ENCODE measurements at regions of chr15 and their contacts with region 1.

Region 1: DNA sequence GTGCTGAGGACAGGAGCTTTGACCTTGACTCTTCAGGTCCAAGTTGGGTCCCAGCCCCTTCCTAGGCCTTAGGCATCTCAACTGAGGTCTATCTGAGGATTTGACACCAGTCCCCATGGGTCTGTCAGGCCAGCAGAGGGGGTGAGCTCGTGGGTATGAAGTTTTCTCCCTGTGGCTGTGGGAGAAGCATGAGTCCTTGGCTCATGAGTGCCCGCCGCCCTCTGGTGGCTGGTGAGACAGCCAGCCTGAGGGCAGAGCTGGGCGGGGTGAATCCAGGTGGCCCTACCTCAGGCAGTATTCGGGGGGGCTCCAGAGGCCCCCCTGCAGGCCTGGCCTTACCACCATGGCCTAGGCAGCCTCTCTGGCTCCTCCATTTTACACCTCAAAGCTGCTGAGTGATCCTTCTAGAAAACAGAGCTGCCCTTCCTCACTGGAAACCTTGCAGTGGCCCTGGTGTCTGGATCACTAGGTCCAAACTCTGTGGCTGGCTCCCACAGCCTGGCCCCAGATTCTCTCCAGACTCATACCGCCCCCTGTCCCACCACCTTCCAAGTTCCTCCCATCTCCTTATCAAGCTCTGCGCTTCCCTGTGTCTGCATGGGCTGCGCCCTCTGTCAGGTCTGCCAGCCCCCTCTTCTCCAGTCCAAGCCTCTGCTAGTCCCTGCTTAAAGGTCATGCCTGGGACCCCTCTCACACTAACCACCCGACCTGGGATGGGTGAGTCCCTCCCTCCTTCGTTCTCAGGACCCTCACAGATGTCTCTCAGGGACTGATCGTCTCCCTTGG is 16.1 kb downstream of the SH2D7 start:
- DNase-seq: peak; percentile 73
- H3K4me3 Mint-ChIP-seq: no peak overlapping the region
- H3K27ac Mint-ChIP-seq: no peak overlapping the region
- H3K4me1 Mint-ChIP-seq: peaks cover 50% of the 10 kb centered on the region
- H3K27me3 Mint-ChIP-seq: no peaks in the 10 kb centered on the region

Region 2: GRCh38 chr15:77959432-77959879 is 149.0 kb before region 1 on chr15:
- intact Hi-C with region 1: loop called (anchors 1 kb)
- DNase-seq: peak; percentile 67
- H3K4me3 Mint-ChIP-seq: no peak overlapping the region
- H3K27ac Mint-ChIP-seq: no peak overlapping the region
- H3K4me1 Mint-ChIP-seq: peaks cover 14% of the 10 kb centered on the region
- H3K27me3 Mint-ChIP-seq: peaks cover 35% of the 10 kb centered on the region

Region 3: DNA sequence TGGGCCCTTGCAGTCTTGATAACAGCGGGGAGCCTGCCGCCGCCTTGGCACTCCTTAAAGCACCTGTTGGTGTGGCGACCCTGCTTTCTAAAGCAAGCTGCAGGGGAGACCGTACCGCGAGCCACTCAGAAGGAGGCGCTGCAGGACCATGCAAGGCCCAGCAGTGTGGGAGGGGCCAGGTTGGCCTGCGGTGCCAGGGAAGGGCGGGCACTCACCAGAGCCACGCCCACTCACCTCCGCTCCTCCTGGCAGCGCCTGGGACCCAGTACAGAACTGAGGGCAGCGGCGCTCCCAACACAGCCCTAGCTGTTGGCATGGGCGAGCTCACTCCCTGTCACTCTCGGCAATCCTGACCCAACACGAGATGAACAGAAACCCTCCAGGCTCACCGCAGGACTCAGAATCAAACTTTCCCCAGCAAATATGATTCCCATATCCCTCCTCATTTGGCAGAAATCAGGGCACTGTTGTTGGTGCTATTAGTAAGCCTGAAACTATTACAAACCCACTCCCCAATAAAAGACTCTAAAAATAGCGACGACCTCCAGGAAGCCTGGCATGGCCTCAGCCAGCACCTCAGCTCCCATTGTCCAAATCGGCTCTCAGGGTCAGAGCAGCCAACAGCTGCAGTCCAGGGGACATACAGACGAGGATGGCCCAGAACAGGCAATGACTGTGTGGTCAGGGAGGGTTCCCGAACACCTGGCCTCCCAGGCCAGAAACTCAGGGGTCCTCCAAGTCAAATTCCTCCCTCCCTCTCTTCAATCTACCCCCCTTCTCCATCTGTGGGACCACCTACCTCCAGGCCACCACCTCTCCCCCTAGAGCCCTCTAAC is 108.2 kb before region 1 on chr15:
- intact Hi-C with region 1: loop called (anchors 1 kb)
- DNase-seq: peak; percentile 58
- H3K4me3 Mint-ChIP-seq: no peak overlapping the region
- H3K27ac Mint-ChIP-seq: peak overlapping the region; percentile 18
- H3K4me1 Mint-ChIP-seq: peaks cover 16% of the 10 kb centered on the region
- H3K27me3 Mint-ChIP-seq: no peaks in the 10 kb centered on the region

Region 4: GRCh38 chr15:78065284-78065872 is 43.1 kb before region 1 on chr15:
- intact Hi-C with region 1: loop called (anchors 5 kb)
- DNase-seq: no peak
- H3K4me3 Mint-ChIP-seq: peak overlapping the region; percentile 9
- H3K27ac Mint-ChIP-seq: no peak overlapping the region
- H3K4me1 Mint-ChIP-seq: no peaks in the 10 kb centered on the region
- H3K27me3 Mint-ChIP-seq: no peaks in the 10 kb centered on the region

Region 5: DNA sequence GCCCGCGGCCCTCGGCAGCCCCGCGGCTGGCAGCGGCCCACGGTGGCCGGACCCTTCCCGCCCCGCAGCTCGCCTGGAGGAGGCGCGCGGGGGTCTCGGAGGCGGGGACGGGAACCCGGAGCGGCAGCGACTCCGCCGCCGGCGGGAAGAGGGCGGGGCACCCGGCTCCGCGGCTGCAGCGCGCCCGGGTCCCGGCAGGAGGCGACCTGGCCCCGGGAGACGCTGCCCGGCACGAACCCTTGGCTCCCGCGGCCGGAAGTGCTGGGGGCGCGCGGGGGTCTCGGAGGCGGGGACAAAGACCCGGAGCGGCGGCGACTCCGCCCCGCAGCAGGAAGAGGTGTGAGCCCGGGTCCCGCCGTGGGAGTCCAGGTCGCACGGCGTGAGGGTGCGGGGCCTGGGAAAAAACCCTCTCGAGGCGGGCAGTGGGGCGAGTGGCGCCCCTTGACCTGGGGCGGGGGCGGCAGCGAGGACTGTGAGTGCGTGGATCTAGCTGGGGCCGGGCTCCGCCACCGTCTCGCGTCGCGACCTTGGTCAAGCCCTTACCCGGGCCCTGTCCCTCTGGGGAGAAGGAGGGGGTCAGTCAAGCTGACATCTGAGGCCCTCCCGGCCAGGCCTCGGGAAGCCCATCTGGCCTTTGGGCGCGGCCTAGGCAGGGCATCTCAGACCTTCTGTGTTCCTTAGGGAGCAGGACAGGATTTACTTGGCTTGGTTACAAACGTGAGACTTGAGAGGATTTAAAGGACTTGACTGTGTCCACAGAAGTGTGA is 23.0 kb after region 1 on chr15 and contains the start of gene CIB2:
- intact Hi-C with region 1: loop called (anchors 1 kb)
- DNase-seq: peak; percentile 82
- H3K4me3 Mint-ChIP-seq: peak within 1 kb of the TSS; percentile 84
- H3K27ac Mint-ChIP-seq: peak within 1 kb of the TSS; percentile 57
- H3K4me1 Mint-ChIP-seq: peaks cover 22% of the 10 kb centered on the region
- H3K27me3 Mint-ChIP-seq: peaks cover 11% of the 10 kb centered on the region
- total RNA-seq, gene CIB2: 1.2 and 1.9 TPM in 2 replicates

Region 6: DNA sequence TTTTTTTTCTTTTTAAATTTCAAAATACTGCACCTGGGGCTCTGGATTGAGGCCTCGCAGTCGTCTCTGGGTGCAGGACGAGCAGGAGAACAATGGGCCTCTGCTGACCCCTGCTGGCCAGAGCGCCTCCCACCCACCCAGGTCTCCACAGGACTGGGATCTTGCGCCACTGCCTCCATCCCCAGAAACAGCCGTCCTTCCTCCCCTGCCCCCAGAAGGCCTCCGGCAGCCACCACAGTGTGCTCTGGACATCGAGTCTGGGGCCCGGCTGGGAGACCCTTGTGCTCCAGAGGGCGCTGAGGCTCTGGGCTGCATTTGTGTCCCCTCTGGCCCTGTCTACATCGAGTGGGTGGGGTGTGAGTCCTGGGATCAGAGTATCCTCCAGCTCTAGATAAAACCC is 132.5 kb after region 1 on chr15:
- intact Hi-C with region 1: loop called (anchors 1 kb)
- DNase-seq: peak; percentile 70
- H3K4me3 Mint-ChIP-seq: no peak overlapping the region
- H3K27ac Mint-ChIP-seq: no peak overlapping the region
- H3K4me1 Mint-ChIP-seq: no peaks in the 10 kb centered on the region
- H3K27me3 Mint-ChIP-seq: peaks cover 16% of the 10 kb centered on the region

Region 7: GRCh38 chr15:78709263-78709882 is 600.9 kb after region 1 on chr15:
- intact Hi-C with region 1: loop called (anchors 1 kb)
- DNase-seq: peak; percentile 48
- H3K4me3 Mint-ChIP-seq: no peak overlapping the region
- H3K27ac Mint-ChIP-seq: no peak overlapping the region
- H3K4me1 Mint-ChIP-seq: peaks cover 8% of the 10 kb centered on the region
- H3K27me3 Mint-ChIP-seq: peaks cover 14% of the 10 kb centered on the region

Measured in activated T-helper 1 cell treated with anti-CD3 and anti-CD28 coated beads, Interleukin-12 subunit alpha, Interleukin-12 subunit beta, Interleukin-2, Interleukin-4 antibody, amounts not matched to agents 30 ng/mL and 10 ng/mL and 1 ng/mL, durations not matched to agents 14 hours and 24 hours and 36 hours (primary cell).